Activated naive CD4-positive, alpha-beta T cell treated with anti-CD3 and anti-CD28 coated beads for 36 hours (primary cell): ENCODE measurements at regions of chr6 and their contacts with region 1.

Region 1: GRCh38 chr6:26285143-26286134 is 79.6 kb upstream of the BTN3A2 start:
- DNase-seq: peak; percentile 99
- H3K4me3 Mint-ChIP-seq: peak overlapping the region; percentile 93
- H3K27ac Mint-ChIP-seq: peak overlapping the region; percentile 100
- H3K4me1 Mint-ChIP-seq: peaks cover 16% of the 10 kb centered on the region
- H3K27me3 Mint-ChIP-seq: peaks cover 3% of the 10 kb centered on the region

Region 2: GRCh38 chr6:26204332-26205165 is 80.9 kb before region 1 on chr6:
- CTCF ChIA-PET with region 1: no interaction called
- intact Hi-C with region 1: loop called (anchors 2 kb)
- DNase-seq: peak; percentile 94
- H3K4me3 Mint-ChIP-seq: no peak overlapping the region
- H3K27ac Mint-ChIP-seq: no peak overlapping the region
- H3K4me1 Mint-ChIP-seq: peaks cover 20% of the 10 kb centered on the region
- H3K27me3 Mint-ChIP-seq: no peaks in the 10 kb centered on the region

Region 3: DNA sequence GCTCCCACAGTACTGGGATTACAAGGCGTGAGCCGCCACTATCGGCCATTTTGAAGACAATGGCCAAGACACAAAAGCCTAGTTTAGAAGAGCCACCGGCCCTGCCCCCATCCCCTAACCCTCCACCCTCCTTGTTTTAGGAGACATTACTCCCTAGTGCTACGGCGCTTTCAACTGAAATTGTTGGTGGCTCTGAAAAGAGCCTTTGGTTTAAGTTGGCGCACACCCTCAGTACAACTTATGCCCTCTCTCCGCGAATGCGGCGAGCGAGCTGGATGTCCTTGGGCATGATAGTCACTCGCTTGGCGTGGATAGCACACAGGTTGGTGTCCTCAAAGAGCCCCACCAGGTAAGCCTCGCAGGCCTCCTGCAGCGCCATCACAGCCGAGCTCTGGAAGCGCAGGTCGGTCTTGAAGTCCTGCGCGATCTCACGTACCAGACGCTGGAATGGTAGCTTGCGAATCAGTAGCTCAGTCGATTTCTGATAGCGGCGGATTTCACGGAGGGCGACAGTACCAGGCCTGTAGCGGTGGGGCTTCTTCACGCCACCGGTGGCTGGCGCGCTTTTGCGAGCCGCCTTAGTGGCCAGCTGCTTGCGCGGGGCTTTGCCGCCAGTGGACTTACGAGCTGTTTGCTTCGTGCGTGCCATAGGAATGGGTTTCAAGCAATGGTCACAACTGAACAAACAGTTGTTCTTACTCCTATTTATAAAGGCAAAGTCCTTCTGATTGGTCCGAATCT is 35.3 kb before region 1 on chr6:
- CTCF ChIA-PET with region 1: interaction called, 4 read pairs
- intact Hi-C with region 1: loop called (anchors 1 kb)
- DNase-seq: peak; percentile 82
- H3K4me3 Mint-ChIP-seq: peak overlapping the region; percentile 86
- H3K27ac Mint-ChIP-seq: peak overlapping the region; percentile 100
- H3K4me1 Mint-ChIP-seq: peaks cover 17% of the 10 kb centered on the region
- H3K27me3 Mint-ChIP-seq: no peaks in the 10 kb centered on the region

Region 4: GRCh38 chr6:26312501-26313390 is 27.3 kb after region 1 on chr6:
- CTCF ChIA-PET with region 1: no interaction called
- intact Hi-C with region 1: loop called (anchors 1 kb)
- DNase-seq: peak; percentile 95
- H3K4me3 Mint-ChIP-seq: peak overlapping the region; percentile 81
- H3K27ac Mint-ChIP-seq: peak overlapping the region; percentile 83
- H3K4me1 Mint-ChIP-seq: peaks cover 28% of the 10 kb centered on the region
- H3K27me3 Mint-ChIP-seq: no peaks in the 10 kb centered on the region

Region 5: GRCh38 chr6:26553635-26554446 is 268.4 kb after region 1 on chr6:
- CTCF ChIA-PET with region 1: no interaction called
- intact Hi-C with region 1: loop called (anchors 1 kb)
- DNase-seq: peak; percentile 91
- H3K4me3 Mint-ChIP-seq: no peak overlapping the region
- H3K27ac Mint-ChIP-seq: no peak overlapping the region
- H3K4me1 Mint-ChIP-seq: peaks cover 26% of the 10 kb centered on the region
- H3K27me3 Mint-ChIP-seq: no peaks in the 10 kb centered on the region

Region 6: DNA sequence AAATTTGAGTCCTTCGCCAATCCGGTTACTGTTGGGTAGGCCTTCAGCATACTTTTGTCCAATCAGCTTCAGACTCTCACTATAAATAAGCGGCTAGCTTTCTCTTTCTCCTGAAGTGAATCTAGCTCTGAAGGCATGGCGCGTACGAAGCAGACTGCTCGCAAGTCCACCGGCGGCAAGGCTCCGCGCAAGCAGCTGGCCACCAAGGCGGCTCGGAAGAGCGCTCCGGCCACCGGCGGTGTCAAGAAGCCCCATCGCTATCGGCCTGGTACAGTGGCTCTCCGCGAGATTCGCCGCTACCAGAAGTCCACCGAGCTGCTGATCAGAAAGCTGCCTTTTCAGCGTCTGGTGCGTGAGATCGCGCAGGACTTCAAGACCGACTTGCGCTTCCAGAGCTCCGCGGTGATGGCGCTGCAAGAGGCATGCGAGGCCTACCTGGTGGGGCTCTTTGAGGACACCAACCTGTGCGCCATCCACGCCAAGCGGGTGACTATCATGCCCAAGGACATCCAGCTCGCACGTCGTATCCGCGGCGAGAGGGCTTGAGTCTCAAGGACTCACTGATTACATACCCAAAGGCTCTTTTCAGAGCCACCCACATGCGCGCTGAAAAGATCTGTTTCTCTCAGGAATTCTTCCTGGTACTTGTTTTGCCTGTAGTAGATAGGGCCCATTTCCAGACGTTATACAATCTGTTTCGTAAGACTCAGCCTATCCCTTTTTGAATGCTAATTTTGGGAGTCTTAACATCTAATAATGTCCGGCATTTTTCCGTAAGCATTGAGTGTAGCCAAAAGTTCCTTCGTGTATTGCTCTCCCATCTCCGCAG is 1524.7 kb after region 1 on chr6:
- CTCF ChIA-PET with region 1: no interaction called
- intact Hi-C with region 1: loop called (anchors 5 kb)
- DNase-seq: peak; percentile 81
- H3K4me3 Mint-ChIP-seq: peak overlapping the region; percentile 93
- H3K27ac Mint-ChIP-seq: peak overlapping the region; percentile 95
- H3K4me1 Mint-ChIP-seq: peaks cover 41% of the 10 kb centered on the region
- H3K27me3 Mint-ChIP-seq: peaks cover 3% of the 10 kb centered on the region